ENCODE measurements at regions of chr2 and their contacts with region 1.

Region 1: GRCh38 chr2:54704688-54705605 is 18.5 kb upstream of the EML6 start:
- DNase-seq: peak; percentile 76
- ATAC-seq: peak; percentile 67
- H3K4me3 ChIP-seq: no peak overlapping the region
- H3K27ac ChIP-seq: no peak overlapping the region
- H3K4me1 ChIP-seq: peaks cover 37% of the 10 kb centered on the region
- H3K27me3 ChIP-seq: no peaks in the 10 kb centered on the region
- CTCF ChIP-seq: peak; percentile 79
- EP300 ChIP-seq: no peak
- POLR2A ChIP-seq: no peak
- RAD21 ChIP-seq: peak; percentile 79

Region 2: GRCh38 chr2:54106631-54107454 is 598.1 kb before region 1 on chr2:
- CTCF ChIA-PET with region 1: no interaction called
- POLR2A ChIA-PET with region 1: no interaction called
- in situ Hi-C with region 1: loop called (anchors 10 kb)
- intact Hi-C with region 1: loop called (anchors 2 kb)
- DNase-seq: peak; percentile 73
- ATAC-seq: peak; percentile 85
- H3K4me3 ChIP-seq: peak overlapping the region in 1 of 3 experiments; percentile 32; a peak in 2 of 6 replicates
- H3K27ac ChIP-seq: no peak overlapping the region
- H3K4me1 ChIP-seq: peaks cover 32% of the 10 kb centered on the region
- H3K27me3 ChIP-seq: no peaks in the 10 kb centered on the region
- CTCF ChIP-seq: peak; percentile 85
- EP300 ChIP-seq: no peak
- POLR2A ChIP-seq: no peak
- RAD21 ChIP-seq: peak; percentile 78

Region 3: GRCh38 chr2:54176577-54176976 is 528.4 kb before region 1 on chr2:
- CTCF ChIA-PET with region 1: no interaction called
- POLR2A ChIA-PET with region 1: no interaction called
- in situ Hi-C with region 1: no loop called
- intact Hi-C with region 1: loop called (anchors 10 kb)
- DNase-seq: peak; percentile 85
- ATAC-seq: peak; percentile 99
- H3K4me3 ChIP-seq: no peak overlapping the region
- H3K27ac ChIP-seq: no peak overlapping the region
- H3K4me1 ChIP-seq: peaks cover 10% of the 10 kb centered on the region
- H3K27me3 ChIP-seq: no peaks in the 10 kb centered on the region
- CTCF ChIP-seq: peak; percentile 94
- EP300 ChIP-seq: no peak
- POLR2A ChIP-seq: no peak
- RAD21 ChIP-seq: peak; percentile 85

Region 4: GRCh38 chr2:54341656-54342055 is 363.3 kb before region 1 on chr2:
- CTCF ChIA-PET with region 1: no interaction called
- POLR2A ChIA-PET with region 1: no interaction called
- in situ Hi-C with region 1: no loop called
- intact Hi-C with region 1: loop called (anchors 10 kb)
- DNase-seq: no peak
- ATAC-seq: no peak; the same call in 2 of the 3 replicates
- H3K4me3 ChIP-seq: no peak overlapping the region
- H3K27ac ChIP-seq: no peak overlapping the region
- H3K4me1 ChIP-seq: no peaks in the 10 kb centered on the region
- H3K27me3 ChIP-seq: peaks cover 0 to 5% of the 10 kb centered on the region in 2 experiments; a peak in 2 of 5 replicates
- CTCF ChIP-seq: peak; percentile 32; the same call in 1 of the 2 replicates
- EP300 ChIP-seq: no peak
- POLR2A ChIP-seq: no peak
- RAD21 ChIP-seq: no peak

Region 5: GRCh38 chr2:54522624-54523281 is 182.2 kb before region 1 on chr2:
- CTCF ChIA-PET with region 1: interaction called, 12 read pairs
- POLR2A ChIA-PET with region 1: interaction called, 3 read pairs
- in situ Hi-C with region 1: loop called (anchors 5 kb)
- intact Hi-C with region 1: loop called (anchors 1 kb)
- DNase-seq: peak; percentile 86
- ATAC-seq: peak; percentile 98
- H3K4me3 ChIP-seq: no peak overlapping the region
- H3K27ac ChIP-seq: no peak overlapping the region
- H3K4me1 ChIP-seq: peaks cover 15% of the 10 kb centered on the region
- H3K27me3 ChIP-seq: no peaks in the 10 kb centered on the region
- CTCF ChIP-seq: peak; percentile 90
- EP300 ChIP-seq: no peak
- POLR2A ChIP-seq: no peak
- RAD21 ChIP-seq: peak; percentile 96

Region 6: GRCh38 chr2:54657664-54658083 is 47.3 kb before region 1 on chr2:
- CTCF ChIA-PET with region 1: interaction called, 22 read pairs
- POLR2A ChIA-PET with region 1: no interaction called
- in situ Hi-C with region 1: loop called (anchors 5 kb)
- intact Hi-C with region 1: loop called (anchors 1 kb)
- DNase-seq: peak; percentile 62
- ATAC-seq: peak; percentile 79
- H3K4me3 ChIP-seq: no peak overlapping the region
- H3K27ac ChIP-seq: no peak overlapping the region
- H3K4me1 ChIP-seq: peaks cover 12% of the 10 kb centered on the region
- H3K27me3 ChIP-seq: no peaks in the 10 kb centered on the region
- CTCF ChIP-seq: peak; percentile 85
- EP300 ChIP-seq: no peak
- POLR2A ChIP-seq: no peak
- RAD21 ChIP-seq: peak; percentile 57

Region 7: DNA sequence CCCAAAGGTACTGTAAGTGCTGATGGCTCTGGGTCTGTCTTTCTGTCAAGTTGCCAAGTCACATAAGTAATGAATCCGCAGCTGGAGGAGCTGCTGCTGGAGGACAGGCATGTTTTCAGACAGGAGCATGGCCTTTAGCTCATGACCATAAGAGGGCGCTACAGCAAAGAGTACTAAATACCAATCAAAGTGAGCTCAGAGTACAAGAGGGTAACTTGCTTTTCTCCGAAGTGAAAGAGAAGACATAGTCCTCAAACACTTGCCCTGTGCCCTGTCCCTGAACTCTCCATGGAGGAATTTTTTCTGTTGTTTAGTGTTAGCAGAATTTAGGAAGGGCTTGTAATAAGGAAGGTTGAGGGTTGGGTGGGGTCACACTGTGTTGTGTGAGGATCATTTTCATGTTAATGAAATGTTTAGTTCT is 39.5 kb before region 1 on chr2:
- CTCF ChIA-PET with region 1: interaction called, 11 read pairs
- POLR2A ChIA-PET with region 1: interaction called, 7 read pairs
- in situ Hi-C with region 1: loop called (anchors 5 kb)
- intact Hi-C with region 1: loop called (anchors 1 kb)
- DNase-seq: peak; percentile 76
- ATAC-seq: peak; percentile 15
- H3K4me3 ChIP-seq: no peak overlapping the region
- H3K27ac ChIP-seq: peak overlapping the region; percentile 86
- H3K4me1 ChIP-seq: peaks cover 90% of the 10 kb centered on the region
- H3K27me3 ChIP-seq: no peaks in the 10 kb centered on the region
- CTCF ChIP-seq: peak; percentile 84
- EP300 ChIP-seq: peak in 1 of 2 experiments; percentile 24; a peak in 1 of 4 replicates
- POLR2A ChIP-seq: no peak
- RAD21 ChIP-seq: peak; percentile 77

Region 8: GRCh38 chr2:54773838-54774237 is 68.9 kb after region 1 on chr2:
- CTCF ChIA-PET with region 1: no interaction called
- POLR2A ChIA-PET with region 1: no interaction called
- in situ Hi-C with region 1: no loop called
- intact Hi-C with region 1: no loop called
- DNase-seq: no peak
- ATAC-seq: peak; percentile 67
- H3K4me3 ChIP-seq: no peak overlapping the region
- H3K27ac ChIP-seq: no peak overlapping the region
- H3K4me1 ChIP-seq: no peaks in the 10 kb centered on the region
- H3K27me3 ChIP-seq: no peaks in the 10 kb centered on the region
- CTCF ChIP-seq: peak; percentile 36
- EP300 ChIP-seq: no peak
- POLR2A ChIP-seq: no peak
- RAD21 ChIP-seq: no peak